ENCODE measurements at regions of chr12 and their contacts with region 1.

Region 1: DNA sequence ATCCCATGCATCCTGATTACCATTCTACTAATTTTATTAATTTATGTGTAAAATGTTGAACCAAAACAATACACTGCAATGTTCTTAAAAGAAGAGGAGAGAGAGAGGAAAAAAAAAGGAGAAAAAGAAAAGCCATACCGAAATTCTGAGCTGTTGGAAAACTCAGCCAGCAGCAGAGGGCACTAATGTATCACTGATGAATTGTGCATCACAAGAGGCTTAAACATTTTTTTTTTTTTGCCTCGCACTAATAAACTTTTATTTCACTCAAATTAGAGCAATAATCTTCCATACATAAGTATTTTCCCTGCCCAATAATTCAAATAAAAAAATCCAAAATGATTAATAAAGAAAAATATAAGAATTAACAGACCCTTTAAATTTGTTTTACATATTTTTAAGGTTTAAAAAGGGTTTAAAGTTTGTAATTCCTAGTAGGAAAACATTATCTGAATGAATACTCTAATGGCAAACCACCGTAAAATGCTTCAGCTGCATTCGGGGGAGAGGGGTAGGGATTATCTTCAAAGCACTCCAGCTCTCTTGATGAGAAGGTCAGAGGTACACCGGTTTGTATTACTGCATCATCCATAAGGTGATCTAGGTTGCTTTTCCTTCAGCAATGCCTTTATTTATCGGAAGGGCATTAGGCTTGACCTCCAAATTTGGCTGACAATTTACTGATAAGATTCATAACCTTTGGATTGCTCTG is 41.9 kb downstream of the ATP23 start:
- DNase-seq: peak; percentile 42
- ATAC-seq: peak; percentile 58; the same call in 1 of the 2 replicates
- H3K4me3 ChIP-seq: no peak overlapping the region
- H3K27ac ChIP-seq: no peak overlapping the region
- H3K4me1 ChIP-seq: no peaks in the 10 kb centered on the region
- H3K27me3 ChIP-seq: no peaks in the 10 kb centered on the region
- CTCF ChIP-seq: peak; percentile 47 to 77 (median 72)
- POLR2A ChIP-seq: no peak
- RAD21 ChIP-seq: peak; percentile 84

Region 2: GRCh38 chr12:58346032-58346632 is 362.8 kb after region 1 on chr12:
- CTCF ChIA-PET with region 1: interaction called, 4 read pairs
- POLR2A ChIA-PET with region 1: no interaction called
- RAD21 ChIA-PET with region 1: no interaction called
- intact Hi-C with region 1: loop called (anchors 5 kb)
- DNase-seq: peak; percentile 12
- ATAC-seq: peak; percentile 77
- H3K4me3 ChIP-seq: no peak overlapping the region
- H3K27ac ChIP-seq: no peak overlapping the region
- H3K4me1 ChIP-seq: no peaks in the 10 kb centered on the region
- H3K27me3 ChIP-seq: no peaks in the 10 kb centered on the region
- CTCF ChIP-seq: peak; percentile 70 to 79 (median 78)
- POLR2A ChIP-seq: no peak
- RAD21 ChIP-seq: peak; percentile 77

Region 3: GRCh38 chr12:58443273-58443980 is 460.1 kb after region 1 on chr12:
- CTCF ChIA-PET with region 1: interaction called, 21 read pairs
- POLR2A ChIA-PET with region 1: no interaction called
- RAD21 ChIA-PET with region 1: no interaction called
- intact Hi-C with region 1: loop called (anchors 1 kb)
- DNase-seq: peak; percentile 40
- ATAC-seq: peak; percentile 84
- H3K4me3 ChIP-seq: no peak overlapping the region
- H3K27ac ChIP-seq: no peak overlapping the region
- H3K4me1 ChIP-seq: no peaks in the 10 kb centered on the region
- H3K27me3 ChIP-seq: no peaks in the 10 kb centered on the region
- CTCF ChIP-seq: peak; percentile 61 to 72 (median 72); a peak in 5 of 6 replicates
- POLR2A ChIP-seq: no peak
- RAD21 ChIP-seq: peak; percentile 78

Region 4: GRCh38 chr12:58529897-58530741 is 546.8 kb after region 1 on chr12:
- CTCF ChIA-PET with region 1: no interaction called
- POLR2A ChIA-PET with region 1: no interaction called
- RAD21 ChIA-PET with region 1: no interaction called
- intact Hi-C with region 1: loop called (anchors 10 kb)
- DNase-seq: no peak
- ATAC-seq: no peak
- H3K4me3 ChIP-seq: no peak overlapping the region
- H3K27ac ChIP-seq: no peak overlapping the region
- H3K4me1 ChIP-seq: peaks cover 0 to 6% of the 10 kb centered on the region in 2 experiments; a peak in 1 of 4 replicates
- H3K27me3 ChIP-seq: no peaks in the 10 kb centered on the region
- CTCF ChIP-seq: no peak
- POLR2A ChIP-seq: no peak
- RAD21 ChIP-seq: no peak

Region 5: GRCh38 chr12:59087077-59087673 is 1103.9 kb after region 1 on chr12:
- CTCF ChIA-PET with region 1: interaction called, 3 read pairs
- POLR2A ChIA-PET with region 1: no interaction called
- RAD21 ChIA-PET with region 1: no interaction called
- intact Hi-C with region 1: loop called (anchors 2 kb)
- DNase-seq: peak; percentile 3
- ATAC-seq: no peak
- H3K4me3 ChIP-seq: no peak overlapping the region
- H3K27ac ChIP-seq: no peak overlapping the region
- H3K4me1 ChIP-seq: no peaks in the 10 kb centered on the region
- H3K27me3 ChIP-seq: no peaks in the 10 kb centered on the region
- CTCF ChIP-seq: peak; percentile 38 to 67 (median 46); a peak in 4 of 6 replicates
- POLR2A ChIP-seq: no peak
- RAD21 ChIP-seq: peak; percentile 76

Region 6: DNA sequence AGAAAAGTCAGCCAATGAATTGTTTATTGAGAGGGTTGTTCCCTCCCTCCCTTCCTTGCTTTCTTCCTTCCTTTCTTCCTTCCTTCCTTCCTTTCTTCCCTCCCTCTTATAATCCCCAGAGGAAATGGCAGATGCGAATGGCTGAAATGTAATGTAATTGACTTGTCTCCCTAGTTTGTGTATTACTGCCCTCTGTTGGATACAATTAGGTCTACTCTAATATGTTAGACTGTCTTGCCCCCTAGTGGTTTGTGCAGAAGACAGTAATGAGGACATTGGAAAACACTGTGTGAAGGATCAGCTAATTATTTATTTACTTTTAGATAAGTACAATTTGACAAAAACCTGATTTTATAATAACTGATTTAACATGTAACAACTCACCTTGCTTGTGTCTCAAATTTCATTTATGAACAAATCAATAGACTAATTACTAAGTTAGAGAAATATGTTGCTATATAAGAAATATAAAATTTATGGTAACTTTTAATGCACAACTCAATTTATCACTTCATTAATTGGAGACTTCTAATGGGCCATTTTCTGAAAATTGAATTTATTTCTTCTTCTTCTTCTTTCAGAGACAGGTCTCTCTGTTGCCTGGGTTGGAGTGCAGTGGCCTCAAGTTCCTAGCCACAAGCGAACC is 1166.8 kb after region 1 on chr12:
- CTCF ChIA-PET with region 1: interaction called, 5 read pairs
- POLR2A ChIA-PET with region 1: no interaction called
- RAD21 ChIA-PET with region 1: no interaction called
- intact Hi-C with region 1: loop called (anchors 5 kb)
- DNase-seq: peak; percentile 79
- ATAC-seq: peak; percentile 98
- H3K4me3 ChIP-seq: no peak overlapping the region
- H3K27ac ChIP-seq: no peak overlapping the region
- H3K4me1 ChIP-seq: no peaks in the 10 kb centered on the region
- H3K27me3 ChIP-seq: no peaks in the 10 kb centered on the region
- CTCF ChIP-seq: peak; percentile 92 to 100 (median 98)
- POLR2A ChIP-seq: no peak
- RAD21 ChIP-seq: peak; percentile 94

Region 7: DNA sequence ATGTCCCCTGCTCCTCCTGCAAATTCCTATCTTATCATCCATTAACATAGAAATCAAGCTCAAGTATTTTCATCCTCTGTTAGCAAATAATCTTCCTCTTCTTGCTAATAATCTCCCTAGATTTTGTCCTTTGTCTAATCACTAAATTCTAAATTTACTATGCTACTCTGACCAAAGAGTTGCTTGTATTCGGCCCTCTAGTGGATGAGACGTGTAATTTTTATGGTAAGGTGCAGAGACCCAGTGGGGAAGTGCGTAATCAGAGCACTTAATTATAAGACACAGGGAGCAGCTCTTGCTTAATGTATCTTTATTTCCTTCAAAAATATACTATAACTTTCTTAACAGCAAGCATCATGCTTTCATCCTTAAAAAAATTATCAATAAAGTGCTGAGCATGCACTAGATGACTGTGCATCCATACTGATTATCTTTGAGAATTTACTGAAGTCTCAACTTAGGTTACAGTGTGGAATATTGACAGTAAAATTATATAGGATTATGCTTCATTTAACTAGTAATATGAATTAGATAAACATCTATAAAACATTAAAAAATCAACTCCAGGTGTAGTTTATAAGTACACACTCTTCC is 1825.1 kb after region 1 on chr12:
- CTCF ChIA-PET with region 1: no interaction called
- POLR2A ChIA-PET with region 1: no interaction called
- RAD21 ChIA-PET with region 1: no interaction called
- intact Hi-C with region 1: loop called (anchors 10 kb)
- DNase-seq: peak; percentile 13
- ATAC-seq: peak; percentile 84
- H3K4me3 ChIP-seq: no peak overlapping the region
- H3K27ac ChIP-seq: no peak overlapping the region
- H3K4me1 ChIP-seq: no peaks in the 10 kb centered on the region
- H3K27me3 ChIP-seq: no peaks in the 10 kb centered on the region
- CTCF ChIP-seq: peak; percentile 35 to 80 (median 67); a peak in 5 of 6 replicates
- POLR2A ChIP-seq: no peak
- RAD21 ChIP-seq: peak; percentile 55

Measured in HCT116 (cell line).